ENCODE measurements at regions of chrX and their contacts with region 1.

Region 1: DNA sequence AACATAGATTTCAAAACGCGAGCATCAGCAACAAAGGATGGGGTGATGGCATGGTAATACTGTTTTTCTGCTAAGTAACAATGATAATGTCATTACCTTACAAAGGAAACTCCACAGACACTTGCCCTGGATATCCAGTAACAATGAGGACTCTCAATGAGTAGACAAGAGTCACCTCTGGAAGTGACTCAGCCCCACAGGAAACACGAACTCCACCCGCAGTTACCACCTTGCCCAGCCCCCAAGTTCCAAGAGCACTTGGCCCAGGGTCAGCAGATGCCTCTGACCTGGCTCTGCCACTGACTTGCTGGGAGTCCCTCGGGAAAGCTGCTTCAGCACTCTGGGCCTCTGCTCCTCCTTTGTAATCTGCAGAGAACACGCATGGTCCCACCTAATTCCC is 110.3 kb upstream of the MAP3K15 start:
- DNase-seq: no peak
- H3K4me3 Mint-ChIP-seq: no peak overlapping the region
- H3K27ac Mint-ChIP-seq: peak overlapping the region; percentile 70
- H3K4me1 Mint-ChIP-seq: peaks cover 23% of the 10 kb centered on the region
- H3K27me3 Mint-ChIP-seq: no peaks in the 10 kb centered on the region
- CTCF ChIP-seq: no peak

Region 2: DNA sequence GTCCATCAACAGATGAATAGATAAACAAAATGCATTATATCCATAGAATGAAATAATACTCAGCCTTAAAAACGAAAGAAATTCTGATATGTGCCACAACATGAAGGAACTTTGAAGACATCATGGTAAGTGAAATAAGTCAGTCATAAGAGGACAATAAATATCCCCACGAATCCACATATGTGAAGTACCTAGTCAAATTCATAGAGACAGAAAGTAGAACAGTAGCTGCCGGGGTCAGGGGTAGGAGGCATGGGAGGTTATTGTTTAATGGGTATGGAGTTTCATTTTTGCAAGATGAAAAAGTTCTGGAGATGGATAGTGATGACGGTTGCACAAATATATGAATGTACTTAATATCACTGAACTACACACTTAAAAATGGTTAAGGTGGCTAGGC is 41.3 kb after region 1 on chrX:
- CTCF ChIA-PET with region 1: interaction called, 6 read pairs
- intact Hi-C with region 1: loop called (anchors 5 kb)
- DNase-seq: no peak
- H3K4me3 Mint-ChIP-seq: peak overlapping the region; percentile 85
- H3K27ac Mint-ChIP-seq: peak overlapping the region; percentile 1
- H3K4me1 Mint-ChIP-seq: peaks cover 66% of the 10 kb centered on the region
- H3K27me3 Mint-ChIP-seq: no peaks in the 10 kb centered on the region
- CTCF ChIP-seq: no peak

Region 3: DNA sequence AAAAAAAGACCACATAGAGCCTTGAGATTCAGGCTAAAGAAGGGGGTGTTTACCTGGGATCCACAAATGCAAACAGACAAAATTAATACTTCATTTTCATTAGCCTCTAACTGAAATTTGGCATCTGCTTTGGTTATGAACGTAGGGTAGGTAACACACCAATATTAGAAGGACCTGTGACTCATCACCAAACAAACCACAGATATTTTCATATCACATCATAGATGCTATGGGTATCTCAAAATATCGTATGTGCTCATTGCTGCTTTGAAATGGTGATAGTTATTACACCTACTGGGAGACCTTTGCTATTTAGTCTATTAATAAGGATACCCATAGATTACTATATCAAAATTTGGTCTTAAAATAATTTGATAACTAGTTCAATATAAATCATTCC is 70.3 kb after region 1 on chrX:
- CTCF ChIA-PET with region 1: no interaction called
- intact Hi-C with region 1: no loop called
- DNase-seq: no peak
- H3K4me3 Mint-ChIP-seq: no peak overlapping the region
- H3K27ac Mint-ChIP-seq: no peak overlapping the region
- H3K4me1 Mint-ChIP-seq: peaks cover 9% of the 10 kb centered on the region
- H3K27me3 Mint-ChIP-seq: no peaks in the 10 kb centered on the region
- CTCF ChIP-seq: no peak

Region 4: GRCh38 chrX:20056704-20057103 is 431.1 kb after region 1 on chrX:
- CTCF ChIA-PET with region 1: no interaction called
- intact Hi-C with region 1: no loop called
- DNase-seq: peak; percentile 53
- H3K4me3 Mint-ChIP-seq: no peak overlapping the region
- H3K27ac Mint-ChIP-seq: no peak overlapping the region
- H3K4me1 Mint-ChIP-seq: peaks cover 65% of the 10 kb centered on the region
- H3K27me3 Mint-ChIP-seq: no peaks in the 10 kb centered on the region
- CTCF ChIP-seq: no peak